Transverse colon (tissue), 4 donors: ENCODE measurements at regions of chr2 and their contacts with region 1.

Region 1: GRCh38 chr2:204681412-204681811 is 136.1 kb downstream of the PARD3B start:
- DNase-seq: no peak
- H3K4me3 ChIP-seq: no peak overlapping the region
- H3K27ac ChIP-seq: peak overlapping the region in 3 of 4 donors; percentile 28 to 49 (median 45)
- H3K4me1 ChIP-seq: peaks cover 0 to 19% (median 0%) of the 10 kb centered on the region in 4 donors
- H3K27me3 ChIP-seq: no peaks in the 10 kb centered on the region
- CTCF ChIP-seq: no peak
- EP300 ChIP-seq: no peak
- POLR2A ChIP-seq: no peak

Region 2: GRCh38 chr2:204452464-204453023 is 228.9 kb before region 1 on chr2:
- in situ Hi-C with region 1: no loop called
- intact Hi-C with region 1: loop called (anchors 10 kb)
- DNase-seq: peak; percentile 44
- H3K4me3 ChIP-seq: no peak overlapping the region
- H3K27ac ChIP-seq: peak overlapping the region; percentile 63 to 85 (median 73)
- H3K4me1 ChIP-seq: peaks cover 15 to 32% (median 21%) of the 10 kb centered on the region in 4 donors
- H3K27me3 ChIP-seq: no peaks in the 10 kb centered on the region
- CTCF ChIP-seq: peak in 1 of 5 experiments; percentile 16
- EP300 ChIP-seq: no peak
- POLR2A ChIP-seq: no peak

Region 3: DNA sequence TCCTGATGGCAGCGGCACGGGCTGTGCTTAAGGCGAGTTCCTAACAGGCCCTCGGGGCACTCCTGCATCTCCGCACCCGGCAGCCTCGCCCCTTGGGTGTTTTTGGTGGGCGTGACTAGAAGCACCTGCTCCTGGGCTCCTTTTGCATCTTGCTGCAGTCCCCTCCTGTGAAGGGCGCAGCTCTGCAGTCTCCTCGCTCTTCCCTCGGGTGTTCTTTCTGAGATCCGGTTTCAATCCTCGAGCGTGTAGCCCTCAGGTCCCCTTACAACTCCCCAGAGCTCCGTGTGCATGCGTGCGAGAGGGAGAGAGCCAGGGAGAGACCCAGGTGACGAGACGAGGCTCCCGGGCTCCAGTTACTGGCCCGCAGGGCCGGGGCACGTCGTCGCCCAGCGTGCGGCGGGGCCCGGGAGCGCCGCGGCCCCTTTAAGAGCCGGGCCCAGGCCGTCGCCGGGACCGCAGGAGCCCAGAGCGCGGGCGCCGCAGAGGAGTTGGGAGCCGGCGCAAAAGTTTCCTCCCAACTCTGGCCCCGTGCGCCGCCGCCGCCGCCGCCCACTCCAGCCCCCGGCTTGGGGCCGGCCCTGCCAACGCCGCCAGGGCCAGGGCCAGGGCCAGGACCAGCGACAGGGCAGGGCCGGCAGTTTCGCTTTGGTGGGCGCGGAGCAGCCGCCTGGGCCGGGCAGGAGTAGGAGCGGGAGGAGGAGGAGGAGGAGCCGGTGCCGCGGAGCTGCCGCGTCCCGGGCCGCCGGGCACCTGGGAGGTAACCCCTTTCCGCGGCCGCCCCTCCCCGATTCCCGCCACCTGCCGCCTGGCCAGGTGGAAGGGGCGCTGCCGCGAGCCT is 136.2 kb before region 1 on chr2 and contains the start of gene PARD3B:
- in situ Hi-C with region 1: no loop called
- intact Hi-C with region 1: loop called (anchors 5 kb)
- DNase-seq: peak; percentile 65
- H3K4me3 ChIP-seq: peak within 1 kb of the TSS; percentile 71 to 92 (median 90)
- H3K27ac ChIP-seq: peak within 1 kb of the TSS; percentile 92 to 96 (median 94)
- H3K4me1 ChIP-seq: peaks cover 5 to 28% (median 19%) of the 10 kb centered on the region in 4 donors
- H3K27me3 ChIP-seq: no peaks in the 10 kb centered on the region
- CTCF ChIP-seq: no peak
- EP300 ChIP-seq: no peak
- POLR2A ChIP-seq: peak; percentile 16
- total RNA-seq, gene PARD3B: 32.6 to 65.7 (median 38.6) TPM

Region 4: GRCh38 chr2:204695506-204695905 is 14.1 kb after region 1 on chr2:
- in situ Hi-C with region 1: no loop called
- intact Hi-C with region 1: no loop called
- DNase-seq: no peak
- H3K4me3 ChIP-seq: no peak overlapping the region
- H3K27ac ChIP-seq: peak overlapping the region in 1 of 4 donors; percentile 1
- H3K4me1 ChIP-seq: peaks cover 0 to 17% (median 0%) of the 10 kb centered on the region in 4 donors
- H3K27me3 ChIP-seq: no peaks in the 10 kb centered on the region
- CTCF ChIP-seq: no peak
- EP300 ChIP-seq: no peak
- POLR2A ChIP-seq: no peak